Dorsolateral prefrontal cortex (tissue), 120 donors: ENCODE measurements at regions of chrX and their contacts with region 1.

Region 1: GRCh38 chrX:138745196-138745595 is 33.7 kb upstream of the FGF13 start:
- DNase-seq: peak in 2 of 10 donors; percentile 10 to 20
- H3K4me3 ChIP-seq: no peak overlapping the region
- H3K27ac ChIP-seq: no peak overlapping the region
- H3K27me3 ChIP-seq: peaks cover 0 to 90% (median 46%) of the 10 kb centered on the region in 45 donors
- CTCF ChIP-seq: peak; percentile 35 to 89 (median 80)

Region 2: DNA sequence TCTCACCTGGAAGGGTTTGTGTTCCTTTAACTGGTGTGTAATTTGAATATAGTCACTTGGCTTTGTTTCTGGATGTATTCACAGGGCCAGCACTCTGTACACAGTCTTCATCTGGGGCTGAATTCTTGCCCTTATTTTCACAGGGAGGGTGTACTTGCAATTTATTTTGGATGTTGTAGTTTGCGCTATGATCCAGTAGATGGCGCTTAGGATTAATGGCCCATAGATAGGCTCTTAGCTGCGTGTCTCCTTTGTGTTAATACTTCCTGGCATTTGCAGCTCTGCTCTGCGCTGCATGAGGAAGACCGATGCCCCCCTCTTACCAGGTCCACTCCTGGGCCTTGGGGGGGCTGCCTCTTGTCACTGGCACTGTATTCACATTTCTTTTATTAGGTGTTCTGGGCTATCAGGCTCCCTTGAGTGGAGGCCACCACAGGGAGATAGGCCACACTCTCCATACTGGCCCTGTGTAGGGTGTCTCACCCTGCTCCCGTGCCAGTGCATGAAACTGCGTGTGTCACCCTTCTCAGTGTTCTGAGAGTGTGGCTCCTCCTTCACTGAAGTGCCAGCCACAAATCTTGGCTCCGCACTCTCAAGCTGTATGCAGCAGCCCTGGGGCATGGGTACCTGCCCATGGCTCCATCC is 617.0 kb before region 1 on chrX:
- intact Hi-C with region 1: loop called (anchors 5 to 10 kb)
- DNase-seq: peak in 2 of 10 donors; percentile 3 to 15
- H3K4me3 ChIP-seq: no peak overlapping the region
- H3K27ac ChIP-seq: no peak overlapping the region
- H3K27me3 ChIP-seq: peaks cover 0 to 88% (median 27%) of the 10 kb centered on the region in 45 donors
- CTCF ChIP-seq: peak; percentile 11 to 71 (median 58)

Region 3: DNA sequence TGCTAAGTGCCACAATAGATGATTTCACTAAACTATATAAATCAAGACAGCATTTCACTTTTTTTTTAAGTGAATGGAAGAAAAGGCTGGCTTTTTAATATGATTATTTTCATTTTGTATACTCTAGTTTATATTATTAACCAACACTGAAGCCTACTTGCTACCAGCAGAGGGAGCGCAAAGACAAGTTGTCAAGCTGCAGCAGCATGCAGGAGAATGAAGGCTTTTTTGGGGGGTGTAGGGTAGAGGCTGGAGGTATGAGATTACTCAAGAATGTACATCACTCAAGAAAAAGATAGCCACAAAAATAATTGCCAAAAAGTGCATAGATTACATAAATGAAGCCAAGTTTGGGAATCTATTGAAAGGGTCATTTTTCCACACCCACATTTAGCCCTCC is 553.2 kb before region 1 on chrX:
- intact Hi-C with region 1: loop called in 1 of 2 experiments (anchors 5 kb)
- DNase-seq: peak in 5 of 10 donors; percentile 3 to 42 (median 31)
- H3K4me3 ChIP-seq: no peak overlapping the region
- H3K27ac ChIP-seq: no peak overlapping the region
- H3K27me3 ChIP-seq: peaks cover 0 to 63% (median 10%) of the 10 kb centered on the region in 45 donors
- CTCF ChIP-seq: peak in 52 of 56 donors; percentile 21 to 70 (median 46)

Region 4: DNA sequence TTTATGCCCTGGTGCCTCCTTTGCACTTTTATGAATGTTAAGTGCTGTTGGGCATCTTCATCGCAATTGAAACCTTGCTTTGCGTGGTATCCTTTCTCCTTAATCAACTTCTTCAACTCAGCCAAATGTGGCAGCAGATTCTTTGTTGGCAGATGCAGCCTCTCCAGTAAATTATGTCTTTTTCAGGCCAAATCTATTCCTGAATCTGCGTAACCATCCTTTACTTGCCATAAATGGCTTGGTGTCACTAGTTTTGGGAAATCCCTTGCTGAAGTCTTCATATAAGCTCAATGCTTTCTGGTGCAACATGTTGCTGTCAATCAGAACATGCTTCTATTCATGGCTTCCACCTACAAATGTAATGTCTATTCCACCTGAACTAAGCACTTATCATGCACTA is 491.2 kb before region 1 on chrX:
- intact Hi-C with region 1: no loop called
- DNase-seq: no peak
- H3K4me3 ChIP-seq: no peak overlapping the region
- H3K27ac ChIP-seq: no peak overlapping the region
- H3K27me3 ChIP-seq: peaks cover 0 to 87% (median 35%) of the 10 kb centered on the region in 45 donors
- CTCF ChIP-seq: no peak

Region 5: GRCh38 chrX:138777230-138777629 is 32.0 kb after region 1 on chrX:
- intact Hi-C with region 1: no loop called
- DNase-seq: no peak
- H3K4me3 ChIP-seq: no peak overlapping the region
- H3K27ac ChIP-seq: no peak overlapping the region
- H3K27me3 ChIP-seq: peaks cover 0 to 46% (median 10%) of the 10 kb centered on the region in 45 donors
- CTCF ChIP-seq: no peak

Region 6: DNA sequence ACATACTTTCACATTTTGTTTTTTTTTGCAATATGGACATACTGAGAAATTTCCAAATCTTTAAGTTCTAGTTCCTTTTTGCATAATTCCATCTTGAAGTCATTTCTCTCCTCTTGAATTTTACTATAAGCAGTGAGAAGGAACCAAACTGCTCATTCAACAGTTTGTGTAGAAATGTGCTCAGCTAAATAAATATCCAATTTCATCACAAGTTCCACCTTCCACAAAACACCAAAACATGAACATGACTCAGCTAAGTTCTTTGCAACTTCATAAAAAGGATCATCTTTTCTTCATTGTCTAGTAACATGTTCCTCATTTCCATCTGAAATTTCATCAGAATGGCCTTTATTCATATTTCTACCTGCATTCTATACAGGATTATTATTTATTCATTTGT is 43.6 kb after region 1 on chrX:
- intact Hi-C with region 1: no loop called
- DNase-seq: no peak
- H3K4me3 ChIP-seq: no peak overlapping the region
- H3K27ac ChIP-seq: no peak overlapping the region
- H3K27me3 ChIP-seq: peaks cover 0 to 46% (median 3%) of the 10 kb centered on the region in 45 donors
- CTCF ChIP-seq: no peak

Region 7: GRCh38 chrX:138847928-138848327 is 102.7 kb after region 1 on chrX:
- intact Hi-C with region 1: no loop called
- DNase-seq: no peak
- H3K4me3 ChIP-seq: no peak overlapping the region
- H3K27ac ChIP-seq: no peak overlapping the region
- H3K27me3 ChIP-seq: peaks cover 0 to 84% (median 25%) of the 10 kb centered on the region in 45 donors
- CTCF ChIP-seq: peak in 11 of 56 donors; percentile 8 to 37 (median 18)